Right cardiac atrium (tissue), 5 donors: ENCODE measurements at regions of chr2 and their contacts with region 1.

Region 1: GRCh38 chr2:236343400-236344161 is 79.4 kb upstream of the ASB18 start:
- DNase-seq: no peak
- ATAC-seq: no peak
- H3K4me3 ChIP-seq: no peak overlapping the region
- H3K27ac ChIP-seq: no peak overlapping the region
- H3K4me1 ChIP-seq: no peaks in the 10 kb centered on the region
- H3K27me3 ChIP-seq: no peaks in the 10 kb centered on the region

Region 2: DNA sequence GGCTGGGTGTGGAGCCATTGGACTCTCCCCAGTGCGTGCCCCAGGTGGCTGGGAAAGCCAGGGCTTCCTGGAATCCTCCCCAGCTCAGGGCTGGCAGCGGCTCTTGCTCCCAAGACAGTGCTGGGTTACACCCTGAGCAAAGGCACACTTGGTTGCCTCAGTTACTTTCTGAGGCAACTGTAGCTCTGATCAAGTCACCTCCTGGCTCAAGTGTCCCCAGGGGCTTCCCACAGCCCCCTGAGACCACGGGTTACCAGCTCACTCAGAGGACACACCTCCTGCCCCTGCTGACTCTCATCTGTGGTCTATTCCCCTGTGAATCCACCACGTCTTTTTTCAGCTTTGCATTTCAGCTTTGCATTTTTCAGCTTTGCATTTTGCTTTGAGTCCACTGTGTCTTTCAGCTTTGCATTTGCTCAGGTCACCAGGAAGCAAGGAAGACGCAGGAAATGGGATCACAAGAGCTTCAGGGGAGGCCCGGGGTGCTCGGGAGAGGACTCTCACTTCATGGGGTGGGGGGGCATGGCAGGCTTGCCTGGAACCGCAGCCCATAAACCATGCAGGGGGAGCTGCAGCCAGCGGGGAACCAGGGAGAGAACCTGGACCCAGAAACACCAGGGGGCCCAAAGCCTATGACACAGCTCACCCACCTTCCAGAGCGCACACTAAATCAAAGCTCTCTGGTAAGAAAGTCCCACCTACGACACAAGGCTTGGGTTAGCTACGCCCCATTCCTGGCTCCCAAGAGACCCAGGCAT is 58.6 kb after region 1 on chr2:
- intact Hi-C with region 1: no loop called
- DNase-seq: no peak
- ATAC-seq: no peak
- H3K4me3 ChIP-seq: no peak overlapping the region
- H3K27ac ChIP-seq: no peak overlapping the region
- H3K4me1 ChIP-seq: no peaks in the 10 kb centered on the region
- H3K27me3 ChIP-seq: no peaks in the 10 kb centered on the region

Region 3: GRCh38 chr2:236745420-236746197 is 402.0 kb after region 1 on chr2:
- intact Hi-C with region 1: no loop called
- DNase-seq: no peak
- ATAC-seq: no peak
- H3K4me3 ChIP-seq: no peak overlapping the region
- H3K27ac ChIP-seq: no peak overlapping the region
- H3K4me1 ChIP-seq: peaks cover 3% of the 10 kb centered on the region
- H3K27me3 ChIP-seq: no peaks in the 10 kb centered on the region

Region 4: GRCh38 chr2:237060534-237061312 is 717.1 kb after region 1 on chr2:
- intact Hi-C with region 1: loop called in 1 of 4 experiments (anchors 10 kb)
- DNase-seq: peak; percentile 30 to 54 (median 31)
- ATAC-seq: peak; percentile 65 to 78
- H3K4me3 ChIP-seq: no peak overlapping the region
- H3K27ac ChIP-seq: no peak overlapping the region
- H3K4me1 ChIP-seq: no peaks in the 10 kb centered on the region
- H3K27me3 ChIP-seq: no peaks in the 10 kb centered on the region